Left lung (tissue), 14 donors: ENCODE measurements at regions of chr4 and their contacts with region 1.

Region 1: GRCh38 chr4:140252742-140253555 is 99.0 kb upstream of the MAML3 start:
- DNase-seq: peak; percentile 74 to 95 (median 82)
- ATAC-seq: peak; percentile 91
- H3K4me3 ChIP-seq: peak overlapping the region; percentile 54 to 64
- H3K27ac ChIP-seq: peak overlapping the region; percentile 87 to 94
- H3K4me1 ChIP-seq: peaks cover 4 to 29% of the 10 kb centered on the region in 2 donors
- H3K27me3 ChIP-seq: peaks cover 0 to 7% of the 10 kb centered on the region in 2 donors
- CTCF ChIP-seq: peak; percentile 84 to 98

Region 2: GRCh38 chr4:139651282-139652194 is 601.4 kb before region 1 on chr4:
- intact Hi-C with region 1: loop called in 1 of 2 experiments (anchors 10 kb)
- DNase-seq: peak in 3 of 4 donors; percentile 81 to 93 (median 87)
- ATAC-seq: peak; percentile 96
- H3K4me3 ChIP-seq: no peak overlapping the region
- H3K27ac ChIP-seq: no peak overlapping the region
- H3K4me1 ChIP-seq: peaks cover 0 to 2% of the 10 kb centered on the region in 2 donors
- H3K27me3 ChIP-seq: no peaks in the 10 kb centered on the region
- CTCF ChIP-seq: peak; percentile 93

Region 3: DNA sequence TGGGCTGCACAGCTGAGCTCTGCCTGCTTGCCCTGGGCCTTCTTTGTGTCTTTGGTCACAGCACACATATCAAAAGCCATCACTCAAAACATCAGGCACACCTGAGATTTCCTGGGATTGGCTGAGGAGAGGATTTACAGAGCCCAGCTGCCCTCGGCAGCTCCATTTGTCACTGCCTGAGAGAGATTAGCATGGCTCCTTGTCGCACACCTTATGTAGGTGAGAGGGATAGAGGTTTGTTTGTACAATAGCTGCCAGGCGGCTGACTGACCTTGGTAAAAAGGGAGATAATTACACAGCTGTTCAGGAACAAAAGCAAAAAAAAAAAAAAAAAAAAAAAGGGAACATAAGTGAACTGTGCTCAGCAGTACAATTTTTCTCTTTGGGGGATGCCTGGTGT is 524.1 kb before region 1 on chr4:
- intact Hi-C with region 1: loop called in 1 of 2 experiments (anchors 10 kb)
- DNase-seq: no peak
- ATAC-seq: no peak
- H3K4me3 ChIP-seq: no peak overlapping the region
- H3K27ac ChIP-seq: no peak overlapping the region
- H3K4me1 ChIP-seq: peaks cover 0 to 6% of the 10 kb centered on the region in 2 donors
- H3K27me3 ChIP-seq: no peaks in the 10 kb centered on the region
- CTCF ChIP-seq: no peak

Region 4: GRCh38 chr4:139866276-139866962 is 386.5 kb before region 1 on chr4:
- intact Hi-C with region 1: no loop called
- DNase-seq: peak in 1 of 4 donors; percentile 48
- ATAC-seq: no peak
- H3K4me3 ChIP-seq: no peak overlapping the region
- H3K27ac ChIP-seq: no peak overlapping the region
- H3K4me1 ChIP-seq: peaks cover 4 to 18% of the 10 kb centered on the region in 2 donors
- H3K27me3 ChIP-seq: no peaks in the 10 kb centered on the region
- CTCF ChIP-seq: no peak

Region 5: GRCh38 chr4:140052050-140052449 is 200.9 kb before region 1 on chr4:
- intact Hi-C with region 1: loop called in 1 of 2 experiments (anchors 10 kb)
- DNase-seq: peak in 1 of 4 donors; percentile 48
- ATAC-seq: peak; percentile 60
- H3K4me3 ChIP-seq: no peak overlapping the region
- H3K27ac ChIP-seq: no peak overlapping the region
- H3K4me1 ChIP-seq: peaks cover 0 to 41% of the 10 kb centered on the region in 2 donors
- H3K27me3 ChIP-seq: no peaks in the 10 kb centered on the region
- CTCF ChIP-seq: peak in 1 of 2 donors; percentile 51

Region 6: GRCh38 chr4:140153718-140154571 is 99.0 kb before region 1 on chr4 and contains the start of gene MAML3:
- intact Hi-C with region 1: loop called in 1 of 2 experiments (anchors 5 kb)
- DNase-seq: peak; percentile 94 to 98 (median 96)
- ATAC-seq: peak; percentile 61
- H3K4me3 ChIP-seq: peak within 1 kb of the TSS; percentile 53 to 69
- H3K27ac ChIP-seq: peak within 1 kb of the TSS; percentile 97 to 99
- H3K4me1 ChIP-seq: peaks cover 4 to 40% of the 10 kb centered on the region in 2 donors
- H3K27me3 ChIP-seq: no peaks in the 10 kb centered on the region
- CTCF ChIP-seq: no peak
- polyA plus RNA-seq, gene MAML3: 16.6 to 18.7 (median 17.1) TPM

Region 7: GRCh38 chr4:140408974-140409373 is 156.0 kb after region 1 on chr4:
- intact Hi-C with region 1: no loop called
- DNase-seq: no peak
- ATAC-seq: no peak
- H3K4me3 ChIP-seq: no peak overlapping the region
- H3K27ac ChIP-seq: no peak overlapping the region
- H3K4me1 ChIP-seq: no peaks in the 10 kb centered on the region
- H3K27me3 ChIP-seq: no peaks in the 10 kb centered on the region
- CTCF ChIP-seq: no peak

Region 8: GRCh38 chr4:140637836-140638235 is 384.9 kb after region 1 on chr4:
- intact Hi-C with region 1: no loop called
- DNase-seq: no peak
- ATAC-seq: peak; percentile 49
- H3K4me3 ChIP-seq: no peak overlapping the region
- H3K27ac ChIP-seq: no peak overlapping the region
- H3K4me1 ChIP-seq: no peaks in the 10 kb centered on the region
- H3K27me3 ChIP-seq: no peaks in the 10 kb centered on the region
- CTCF ChIP-seq: peak; percentile 32 to 51